ENCODE measurements at regions of chr7 and their contacts with region 1.

Region 1: DNA sequence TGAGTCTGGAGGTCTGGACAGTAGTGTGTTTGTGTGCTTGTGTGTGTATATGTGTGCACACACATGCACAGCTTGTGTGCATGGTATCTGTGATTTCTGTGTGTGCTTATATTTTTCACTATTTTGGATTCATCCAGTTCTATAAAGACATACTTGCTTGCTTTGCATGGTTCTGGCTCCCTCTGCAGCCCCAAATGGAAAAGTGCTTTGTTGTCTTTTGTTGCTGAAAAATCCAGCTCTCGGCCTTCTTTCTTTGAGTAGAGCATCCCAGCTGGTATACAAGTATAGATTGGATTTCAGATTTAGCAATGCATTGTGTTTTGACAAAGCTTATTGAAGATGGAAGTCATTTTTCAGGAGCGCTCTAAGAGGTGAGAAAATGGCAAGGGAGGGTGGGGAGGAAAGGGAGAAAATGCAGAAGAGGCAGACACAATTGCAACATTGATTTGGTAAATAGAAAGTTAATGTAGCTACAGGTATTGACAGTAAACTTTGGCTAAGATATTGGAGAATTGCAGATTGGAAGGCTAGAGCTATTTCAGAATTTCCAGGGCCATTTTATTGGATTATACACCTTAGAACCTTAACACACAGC is 333.9 kb downstream of the AUTS2 start:
- DNase-seq: peak; percentile 36 to 65 (median 59)
- H3K4me3 ChIP-seq: no peak overlapping the region
- H3K27ac ChIP-seq: no peak overlapping the region
- H3K4me1 ChIP-seq: peaks cover 0 to 4% (median 1%) of the 10 kb centered on the region in 4 experiments
- H3K27me3 ChIP-seq: no peaks in the 10 kb centered on the region

Region 2: GRCh38 chr7:69403169-69403568 is 529.0 kb before region 1 on chr7:
- CTCF ChIA-PET with region 1: interaction called, 15 read pairs
- POLR2A ChIA-PET with region 1: no interaction called
- DNase-seq: peak; percentile 67 to 78 (median 75)
- H3K4me3 ChIP-seq: no peak overlapping the region
- H3K27ac ChIP-seq: no peak overlapping the region
- H3K4me1 ChIP-seq: no peaks in the 10 kb centered on the region
- H3K27me3 ChIP-seq: peaks cover 0 to 2% (median 0%) of the 10 kb centered on the region in 5 experiments

Region 3: DNA sequence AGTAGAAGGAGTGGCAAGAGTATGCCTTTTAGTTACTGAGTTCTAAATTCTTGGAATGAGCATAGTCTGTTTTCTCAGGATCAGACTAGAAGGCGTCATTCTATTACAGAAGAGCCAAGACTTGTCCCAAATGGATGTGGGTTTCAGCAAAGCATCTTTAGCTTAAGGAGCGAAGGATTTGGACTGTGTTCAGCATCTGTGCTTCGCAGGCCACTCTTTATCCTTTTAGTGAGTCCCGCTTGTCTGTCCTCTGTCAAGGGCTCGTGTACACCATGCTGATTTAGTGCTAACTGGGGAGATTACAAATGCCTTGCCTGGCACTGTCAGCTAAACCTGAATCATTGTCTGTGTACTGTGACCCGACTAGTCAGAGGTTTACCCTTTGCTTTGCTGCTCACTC is 131.8 kb after region 1 on chr7:
- CTCF ChIA-PET with region 1: no interaction called
- POLR2A ChIA-PET with region 1: no interaction called
- DNase-seq: no peak
- H3K4me3 ChIP-seq: no peak overlapping the region
- H3K27ac ChIP-seq: no peak overlapping the region
- H3K4me1 ChIP-seq: peaks cover 0 to 3% (median under 1%) of the 10 kb centered on the region in 4 experiments
- H3K27me3 ChIP-seq: no peaks in the 10 kb centered on the region

Measured in common myeloid progenitor, CD34-positive (primary cell).